PC-3 (cell line): ENCODE measurements at regions of chr11 and their contacts with region 1.

Region 1: DNA sequence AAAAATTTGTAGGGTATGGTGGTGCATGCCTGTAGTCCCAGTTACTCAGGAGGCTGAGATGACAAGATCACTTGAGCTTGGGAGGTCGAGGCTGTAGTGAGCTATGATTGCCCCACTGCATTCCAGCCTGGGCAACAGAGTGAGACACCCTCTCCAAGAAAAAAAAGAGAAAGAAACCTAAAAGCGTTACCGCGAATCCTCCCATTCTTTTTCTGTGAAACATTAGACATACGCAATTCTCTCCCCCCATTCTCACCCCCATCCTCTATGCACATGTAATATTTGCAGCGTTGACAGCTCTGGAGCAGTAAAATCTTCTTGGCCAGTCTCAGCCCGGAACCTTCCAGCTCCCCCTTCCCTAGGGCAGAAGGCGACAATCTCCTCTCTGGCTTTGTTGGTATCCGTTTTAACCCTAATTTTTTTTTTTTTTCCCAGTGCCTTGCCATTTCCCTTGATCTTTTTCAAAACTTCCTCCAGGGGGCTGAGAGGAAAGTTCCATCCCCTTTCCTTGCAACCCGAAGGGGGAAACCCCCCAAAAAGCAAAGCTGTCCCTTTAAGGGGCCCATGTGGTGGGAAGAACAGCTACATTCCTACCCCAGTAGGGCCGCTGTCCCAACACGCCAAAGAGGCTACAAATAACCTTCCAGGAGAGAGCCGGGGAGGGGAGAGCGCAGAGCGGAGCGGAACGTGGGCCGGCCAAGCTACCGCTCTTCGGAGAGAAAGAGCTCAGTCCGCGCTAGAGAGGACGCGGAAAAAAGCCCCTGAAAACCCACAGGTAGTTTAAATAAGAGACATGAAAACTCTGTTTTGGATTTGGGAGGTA is 1.9 kb downstream of the LRP4 start:
- DNase-seq: no peak
- ATAC-seq: peak; percentile 14; the same call in 1 of the 2 replicates
- H3K4me3 ChIP-seq: peak overlapping the region; percentile 62
- H3K27ac ChIP-seq: no peak overlapping the region
- H3K4me1 ChIP-seq: peaks cover 17% of the 10 kb centered on the region
- H3K27me3 ChIP-seq: peaks cover 15% of the 10 kb centered on the region
- CTCF ChIP-seq: no peak

Region 2: GRCh38 chr11:47143322-47143721 is 226.8 kb after region 1 on chr11:
- CTCF ChIA-PET with region 1: no interaction called
- POLR2A ChIA-PET with region 1: interaction called, 10 read pairs
- intact Hi-C with region 1: no loop called
- DNase-seq: peak; percentile 55
- ATAC-seq: peak; percentile 64
- H3K4me3 ChIP-seq: no peak overlapping the region
- H3K27ac ChIP-seq: no peak overlapping the region
- H3K4me1 ChIP-seq: 0 out of 2 replicates have a peak, but pooled peaks cover 5% of the 10 kb centered on the region
- H3K27me3 ChIP-seq: no peaks in the 10 kb centered on the region
- CTCF ChIP-seq: no peak

Region 3: DNA sequence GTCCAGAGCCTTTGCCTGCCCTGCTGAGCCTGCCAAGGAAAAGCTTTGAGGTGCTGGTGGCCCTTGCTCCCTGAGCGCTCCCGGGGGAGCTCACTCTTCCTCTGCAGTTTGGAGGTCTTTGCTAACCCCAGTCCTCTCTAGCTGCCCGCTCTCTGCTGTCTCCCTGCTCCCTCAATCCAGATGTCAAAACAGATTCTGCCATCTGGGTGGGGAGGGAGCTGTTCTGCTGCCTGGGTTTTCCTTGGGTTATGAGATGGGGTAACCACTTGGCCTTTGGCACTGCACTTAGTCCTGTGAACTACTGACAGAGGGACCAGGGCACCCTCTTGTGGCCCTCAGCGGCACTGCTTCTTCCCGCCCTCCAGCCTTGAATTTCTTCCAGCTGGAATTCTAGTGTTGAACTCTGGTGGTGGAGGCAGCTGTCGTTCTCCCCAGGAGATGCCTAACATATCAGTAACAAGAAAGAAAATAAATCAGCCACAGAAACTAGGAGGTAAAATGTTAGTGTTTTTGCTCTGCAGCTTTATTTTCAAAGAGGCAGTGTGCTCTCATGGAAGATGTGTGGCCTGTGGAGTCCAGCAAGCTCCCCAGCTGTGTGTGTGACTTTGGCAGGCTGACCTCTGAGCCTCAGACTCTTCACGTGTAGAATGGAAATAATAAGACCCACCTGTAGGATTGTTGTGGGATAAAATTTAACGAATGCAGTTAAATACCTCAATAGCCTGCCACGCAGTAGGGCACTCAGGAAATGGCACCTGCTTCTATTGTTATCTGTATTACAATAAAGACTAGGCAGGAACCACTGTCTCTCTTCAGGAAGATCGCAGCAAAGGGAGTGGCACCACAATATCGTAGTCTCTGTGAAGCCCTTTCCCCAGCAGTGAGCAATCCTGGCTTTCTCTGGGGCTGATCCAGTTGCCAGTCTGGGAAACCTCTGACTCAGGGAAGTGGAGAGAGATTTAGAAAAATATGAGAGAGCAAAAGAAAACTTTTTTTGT is 236.8 kb after region 1 on chr11:
- CTCF ChIA-PET with region 1: interaction called, 5 read pairs
- POLR2A ChIA-PET with region 1: no interaction called
- intact Hi-C with region 1: loop called (anchors 1 kb)
- DNase-seq: peak; percentile 79
- ATAC-seq: peak; percentile 86
- H3K4me3 ChIP-seq: no peak overlapping the region
- H3K27ac ChIP-seq: no peak overlapping the region
- H3K4me1 ChIP-seq: no peaks in the 10 kb centered on the region
- H3K27me3 ChIP-seq: no peaks in the 10 kb centered on the region
- CTCF ChIP-seq: peak; percentile 95

Region 4: DNA sequence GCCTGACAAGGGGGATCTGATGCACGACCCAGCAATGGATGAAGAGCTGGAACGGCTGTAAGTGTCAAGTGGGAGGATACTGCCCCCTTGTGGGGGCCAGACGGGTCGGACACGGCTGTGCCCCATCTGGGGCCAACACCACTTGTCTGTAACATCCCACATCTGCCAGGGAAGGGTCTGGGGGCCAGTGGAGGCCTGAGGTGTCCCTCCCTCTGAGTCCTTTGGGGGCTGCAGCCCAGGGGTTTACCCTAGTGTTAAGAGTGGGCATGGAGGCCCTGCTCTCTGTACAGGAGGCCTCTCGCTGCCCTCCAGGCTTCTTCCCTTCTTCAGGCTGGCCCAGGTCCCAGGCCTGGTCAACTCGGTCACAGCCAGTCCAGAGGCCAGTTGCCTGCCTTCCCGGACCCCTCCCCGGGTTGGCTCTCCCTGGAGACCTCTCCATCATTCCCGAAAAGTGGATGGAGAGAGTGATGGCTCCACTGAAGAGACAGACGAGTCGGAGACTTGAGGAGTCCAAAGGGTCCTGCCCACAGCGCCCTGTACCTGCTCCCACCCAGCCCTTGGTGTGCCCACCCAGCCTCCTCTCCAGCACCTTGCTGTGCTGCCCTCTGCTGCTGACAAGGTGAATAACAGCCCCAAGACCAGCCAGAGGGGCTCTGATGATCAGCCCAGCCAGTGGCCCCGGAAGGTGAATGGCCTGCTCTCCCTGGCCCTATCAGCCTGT is 244.8 kb after region 1 on chr11:
- CTCF ChIA-PET with region 1: interaction called, 14 read pairs
- POLR2A ChIA-PET with region 1: no interaction called
- intact Hi-C with region 1: no loop called
- DNase-seq: peak; percentile 71
- ATAC-seq: peak; percentile 83
- H3K4me3 ChIP-seq: no peak overlapping the region
- H3K27ac ChIP-seq: no peak overlapping the region
- H3K4me1 ChIP-seq: no peaks in the 10 kb centered on the region
- H3K27me3 ChIP-seq: no peaks in the 10 kb centered on the region
- CTCF ChIP-seq: peak; percentile 75